Activated CD4-positive, alpha-beta T cell treated with anti-CD3 and anti-CD28 coated beads for 36 hours (primary cell): ENCODE measurements at regions of chr17 and their contacts with region 1.

Region 1: DNA sequence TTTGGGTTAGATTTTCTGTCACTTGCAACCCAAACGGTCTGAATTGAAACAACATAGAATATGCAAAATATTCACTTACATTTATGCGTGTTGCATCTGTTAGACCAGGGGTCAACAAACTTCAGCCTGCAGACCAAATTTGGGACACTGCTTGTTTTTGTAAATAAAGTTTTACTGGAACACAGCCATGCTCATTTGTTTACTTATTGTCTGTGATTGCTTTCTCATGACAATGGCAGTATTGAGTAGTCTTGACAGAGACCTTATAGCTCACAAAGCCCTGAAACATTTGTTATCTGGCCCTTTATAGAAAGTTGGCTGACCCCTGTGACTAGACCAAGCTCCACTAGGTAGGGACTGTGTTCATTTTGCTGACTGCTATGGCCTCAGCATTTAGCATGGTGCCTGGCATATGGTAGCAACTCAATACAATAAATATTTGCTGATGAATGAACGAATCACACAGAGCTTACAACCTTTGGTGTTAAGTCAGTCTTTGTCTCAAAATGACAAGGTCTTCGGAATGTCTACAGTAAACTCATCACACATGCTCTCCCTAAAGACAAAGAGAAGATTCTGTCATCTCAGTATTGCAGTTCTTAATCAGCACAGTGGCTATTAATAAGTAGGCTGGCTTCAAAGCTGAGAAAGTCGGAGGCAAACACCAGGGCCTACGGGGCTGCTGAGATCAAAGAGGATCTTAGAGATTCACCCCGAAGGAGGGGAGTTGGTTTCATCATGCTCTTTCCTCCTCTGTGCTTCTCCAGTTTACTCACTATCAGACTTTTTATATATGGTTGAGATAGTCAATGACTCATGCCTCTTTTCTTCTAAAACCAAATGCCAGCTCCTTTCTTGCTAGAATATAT is 95.2 kb upstream of the AXIN2 start:
- DNase-seq: peak; percentile 80
- ATAC-seq: peak; percentile 98
- H3K4me3 Mint-ChIP-seq: no peak overlapping the region
- H3K27ac Mint-ChIP-seq: peak overlapping the region; percentile 74
- H3K4me1 Mint-ChIP-seq: peaks cover 33% of the 10 kb centered on the region
- H3K27me3 Mint-ChIP-seq: peaks cover 4% of the 10 kb centered on the region

Region 2: DNA sequence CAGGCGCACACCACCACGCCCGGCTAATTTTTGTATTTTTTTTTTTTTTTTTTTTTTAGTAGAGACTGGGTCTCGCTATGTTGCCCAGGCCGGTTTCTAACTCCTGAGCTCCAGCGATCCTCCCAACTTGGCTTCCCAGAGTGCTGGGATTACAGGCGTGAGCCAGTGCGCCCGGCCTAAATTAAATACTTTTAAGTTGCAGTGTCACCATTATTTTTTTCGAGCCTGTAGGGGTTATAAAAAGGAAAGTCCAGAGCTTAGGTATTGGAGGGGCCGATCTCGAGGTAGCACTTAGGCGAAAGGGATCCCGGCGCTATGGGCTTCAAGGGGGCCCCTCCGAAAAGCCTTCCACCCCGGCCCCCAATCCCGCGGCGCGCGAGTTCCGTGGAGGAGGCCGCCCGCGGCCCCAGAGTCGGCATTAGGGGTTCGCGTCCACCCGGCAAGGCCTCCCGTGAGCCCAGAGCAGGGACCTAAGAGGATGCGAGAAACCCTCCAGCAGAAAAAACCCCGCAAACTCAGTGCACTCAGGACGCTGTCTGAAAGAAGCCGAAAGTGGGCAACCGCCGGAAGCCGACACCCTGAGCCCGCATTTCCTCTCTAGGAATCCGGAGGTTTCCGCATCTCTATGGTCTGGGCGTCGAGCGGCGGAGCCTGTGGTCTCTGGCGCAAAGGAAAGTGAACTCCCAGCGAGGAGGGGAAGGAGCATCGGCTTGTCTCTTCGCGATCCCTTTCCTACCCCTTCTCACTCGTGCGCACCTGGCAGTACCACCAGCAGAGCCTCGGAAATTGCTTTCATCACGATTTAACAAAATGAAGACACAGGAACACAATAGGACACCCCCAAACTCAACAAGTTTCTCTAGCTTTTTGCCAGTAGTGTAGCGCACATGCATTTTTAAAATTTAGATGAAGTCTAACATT is 533.5 kb before region 1 on chr17:
- CTCF ChIA-PET with region 1: no interaction called
- POLR2A ChIA-PET with region 1: no interaction called
- intact Hi-C with region 1: loop called in 1 of 2 experiments (anchors 2 kb)
- DNase-seq: peak; percentile 89
- ATAC-seq: peak; percentile 69
- H3K4me3 Mint-ChIP-seq: peak overlapping the region; percentile 70
- H3K27ac Mint-ChIP-seq: peak overlapping the region; percentile 98
- H3K4me1 Mint-ChIP-seq: peaks cover 22% of the 10 kb centered on the region
- H3K27me3 Mint-ChIP-seq: peaks cover 6% of the 10 kb centered on the region

Region 3: GRCh38 chr17:65514082-65514481 is 142.5 kb before region 1 on chr17:
- CTCF ChIA-PET with region 1: no interaction called
- POLR2A ChIA-PET with region 1: no interaction called
- intact Hi-C with region 1: loop called in 1 of 2 experiments (anchors 2 kb)
- DNase-seq: peak; percentile 55
- ATAC-seq: peak; percentile 75
- H3K4me3 Mint-ChIP-seq: no peak overlapping the region
- H3K27ac Mint-ChIP-seq: no peak overlapping the region
- H3K4me1 Mint-ChIP-seq: peaks cover 14% of the 10 kb centered on the region
- H3K27me3 Mint-ChIP-seq: peaks cover 2% of the 10 kb centered on the region

Region 4: GRCh38 chr17:65556014-65556909 is 100.4 kb before region 1 on chr17:
- CTCF ChIA-PET with region 1: interaction called, 3 read pairs
- POLR2A ChIA-PET with region 1: interaction called, 3 read pairs
- intact Hi-C with region 1: loop called (anchors 1 to 5 kb)
- DNase-seq: peak; percentile 96
- ATAC-seq: peak; percentile 50
- H3K4me3 Mint-ChIP-seq: no peak overlapping the region
- H3K27ac Mint-ChIP-seq: peak overlapping the region; percentile 10
- H3K4me1 Mint-ChIP-seq: peaks cover 27% of the 10 kb centered on the region
- H3K27me3 Mint-ChIP-seq: peaks cover 4% of the 10 kb centered on the region

Region 5: DNA sequence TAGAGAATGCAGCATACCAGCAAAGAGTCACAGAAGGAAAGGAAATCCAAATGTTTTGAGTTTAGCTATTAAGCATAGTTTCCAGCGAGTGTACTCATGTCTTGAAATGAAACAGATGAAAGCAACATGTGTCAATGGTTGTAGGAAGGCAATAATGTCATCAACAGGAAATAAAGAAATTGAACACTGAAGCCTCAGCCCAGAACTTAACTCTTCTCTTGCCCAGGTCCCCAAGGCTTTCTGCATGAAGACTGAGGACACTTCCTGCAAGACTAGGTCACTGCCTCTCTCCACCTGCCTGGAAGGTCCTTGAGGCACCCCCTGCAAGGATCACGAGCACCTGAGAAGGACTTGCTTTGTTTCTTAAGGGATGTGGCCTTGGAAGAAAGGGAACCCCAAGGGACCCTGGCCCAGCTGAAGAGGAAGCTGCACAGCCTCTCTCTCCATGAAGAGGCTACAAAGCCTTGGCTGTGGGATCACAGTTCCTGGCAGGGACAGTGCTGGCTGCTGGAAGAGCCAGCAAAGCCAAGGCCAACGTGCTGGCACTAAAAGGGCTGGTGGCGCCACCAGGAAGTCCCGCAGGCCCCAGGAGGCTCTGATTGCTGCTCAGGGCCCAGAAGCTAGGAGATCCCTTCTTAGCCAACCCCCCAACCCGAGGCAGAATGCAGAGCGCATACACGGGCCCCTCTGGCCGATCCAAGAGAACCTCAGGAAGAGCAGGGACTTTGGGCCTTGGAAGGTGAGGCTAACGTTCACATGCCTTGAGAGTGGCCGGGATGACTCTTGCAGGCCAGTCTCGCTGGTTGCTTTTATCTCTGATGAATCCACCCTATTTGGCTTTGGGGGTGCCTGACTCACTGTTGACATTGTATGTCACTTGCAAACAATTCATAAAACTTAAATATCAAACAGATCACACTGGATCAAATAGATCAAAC is 71.7 kb before region 1 on chr17:
- CTCF ChIA-PET with region 1: no interaction called
- POLR2A ChIA-PET with region 1: interaction called, 3 read pairs
- intact Hi-C with region 1: loop called in 1 of 2 experiments (anchors 1 kb)
- DNase-seq: no peak
- ATAC-seq: peak; percentile 77
- H3K4me3 Mint-ChIP-seq: no peak overlapping the region
- H3K27ac Mint-ChIP-seq: peak overlapping the region; percentile 72
- H3K4me1 Mint-ChIP-seq: peaks cover 43% of the 10 kb centered on the region
- H3K27me3 Mint-ChIP-seq: no peaks in the 10 kb centered on the region

Region 6: DNA sequence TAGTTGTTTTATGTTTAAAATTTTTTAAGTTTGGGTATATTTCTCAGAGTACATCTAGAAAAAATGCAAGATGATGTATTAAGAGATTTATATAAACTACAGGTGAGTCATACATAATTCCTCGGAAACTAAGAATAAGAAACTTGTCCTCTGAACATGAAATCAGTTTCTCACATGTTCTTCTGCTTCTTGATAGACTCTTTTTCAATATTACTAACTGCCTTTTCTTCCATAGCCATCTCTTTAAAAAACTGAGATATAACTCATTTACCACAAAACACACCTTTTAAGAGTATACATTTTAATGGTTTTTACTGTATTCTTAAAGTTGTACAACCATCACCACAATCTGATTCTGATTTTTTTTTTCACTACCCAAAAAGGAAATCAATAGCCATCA is 143.3 kb after region 1 on chr17:
- CTCF ChIA-PET with region 1: interaction called, 3 read pairs
- POLR2A ChIA-PET with region 1: no interaction called
- intact Hi-C with region 1: loop called (anchors 1 to 5 kb)
- DNase-seq: no peak
- ATAC-seq: peak; percentile 72
- H3K4me3 Mint-ChIP-seq: no peak overlapping the region
- H3K27ac Mint-ChIP-seq: peak overlapping the region; percentile 78
- H3K4me1 Mint-ChIP-seq: peaks cover 26% of the 10 kb centered on the region
- H3K27me3 Mint-ChIP-seq: peaks cover 3% of the 10 kb centered on the region